Left cardiac atrium (tissue), 4 donors: ENCODE measurements at regions of chr13 and their contacts with region 1.

Region 1: DNA sequence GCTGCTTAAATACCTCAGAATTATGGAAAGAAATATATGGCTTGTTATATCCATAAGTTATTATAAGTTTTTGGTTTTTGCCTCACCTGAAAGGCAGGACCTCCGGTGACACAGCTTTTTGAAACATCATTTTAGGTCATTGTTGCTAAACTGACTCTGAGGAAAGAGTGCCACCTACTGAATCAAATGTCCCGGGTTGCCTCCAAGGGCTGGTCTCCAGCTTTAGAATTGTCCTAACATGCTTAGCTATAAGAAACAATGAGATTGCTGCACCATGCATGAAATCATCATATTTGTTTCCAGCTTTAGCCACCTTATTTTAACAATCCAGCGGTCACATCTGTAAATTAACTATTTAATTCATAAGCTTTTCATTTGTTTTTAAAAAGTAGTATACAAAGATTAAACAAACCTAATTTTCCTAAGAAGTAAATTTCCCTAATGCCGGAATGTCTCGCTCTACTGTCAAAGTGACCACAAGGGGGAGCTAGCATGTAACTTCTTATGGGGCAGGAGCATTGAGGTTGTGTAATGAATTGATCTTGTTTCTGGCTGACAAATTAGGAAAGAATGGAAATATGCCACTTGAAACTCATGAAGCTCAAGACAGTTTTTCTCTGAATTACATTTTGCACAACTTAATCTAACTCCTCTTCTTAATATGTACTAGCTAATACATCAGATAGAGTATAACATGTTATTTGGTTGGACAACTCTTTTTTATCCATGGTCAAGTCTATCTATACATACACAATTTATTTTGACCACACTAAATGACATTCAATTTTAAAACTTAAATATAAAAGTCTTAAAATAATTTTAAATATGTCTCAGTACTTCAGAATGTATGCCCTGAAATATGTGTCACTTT is 6.7 kb upstream of the PCDH17 start:
- DNase-seq: no peak
- ATAC-seq: no peak

Region 2: GRCh38 chr13:57491293-57491692 is 133.5 kb before region 1 on chr13:
- intact Hi-C with region 1: no loop called
- DNase-seq: no peak
- ATAC-seq: no peak

Region 3: DNA sequence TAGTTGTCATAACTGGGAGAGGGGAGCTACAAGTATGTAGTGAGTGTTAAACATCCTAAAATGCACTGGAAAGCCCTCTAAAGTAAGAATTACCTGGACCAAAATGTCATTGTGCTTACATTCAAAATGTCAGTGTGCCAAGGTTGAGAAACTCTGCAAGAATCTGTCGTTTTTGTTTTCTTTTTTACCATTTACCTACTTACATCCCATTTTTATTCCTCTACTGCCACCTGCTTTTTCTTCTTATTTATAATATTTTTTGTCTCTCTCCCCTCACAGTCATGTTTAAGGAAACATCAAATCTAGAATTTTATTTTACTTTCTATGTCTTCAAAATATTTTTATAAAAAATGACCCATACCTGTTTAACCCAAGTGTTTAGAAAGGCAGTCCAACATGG is 233.1 kb after region 1 on chr13:
- intact Hi-C with region 1: loop called in 1 of 2 experiments (anchors 5 kb)
- DNase-seq: no peak
- ATAC-seq: no peak

Region 4: GRCh38 chr13:58960888-58961287 is 1336.1 kb after region 1 on chr13:
- intact Hi-C with region 1: loop called in 1 of 2 experiments (anchors 5 kb)
- DNase-seq: no peak
- ATAC-seq: no peak

Region 5: GRCh38 chr13:58994777-58995176 is 1370.0 kb after region 1 on chr13:
- intact Hi-C with region 1: loop called in 1 of 2 experiments (anchors 10 kb)
- DNase-seq: no peak
- ATAC-seq: no peak

Region 6: DNA sequence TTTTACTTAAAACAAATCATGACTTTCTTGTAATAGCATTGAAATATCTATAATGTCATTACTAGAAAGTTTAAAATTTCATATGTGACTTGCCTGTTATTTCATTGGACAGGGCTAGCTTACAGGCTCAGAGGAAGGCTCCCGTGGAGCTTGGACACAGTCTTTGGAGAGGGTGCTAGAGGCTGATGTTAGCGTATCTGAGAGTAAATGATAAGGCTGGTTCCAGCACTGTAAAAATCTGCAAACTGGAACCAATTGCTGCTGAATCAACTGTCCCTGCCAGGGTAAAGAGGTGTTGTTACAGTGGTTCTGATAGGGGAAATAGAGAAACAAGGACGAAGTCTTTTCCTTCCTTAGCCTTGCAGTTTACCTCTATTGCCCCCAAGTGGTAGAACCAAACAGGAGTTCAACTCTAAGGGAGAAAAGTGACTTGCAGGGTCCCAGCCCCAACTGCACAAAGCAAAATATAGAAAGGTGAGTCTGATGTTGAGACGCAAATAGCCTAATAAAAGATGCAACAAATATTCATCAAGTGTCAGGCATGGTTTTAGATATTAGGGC is 1637.2 kb after region 1 on chr13:
- intact Hi-C with region 1: loop called in 1 of 2 experiments (anchors 2 kb)
- DNase-seq: no peak
- ATAC-seq: peak; percentile 47 to 52

Region 7: DNA sequence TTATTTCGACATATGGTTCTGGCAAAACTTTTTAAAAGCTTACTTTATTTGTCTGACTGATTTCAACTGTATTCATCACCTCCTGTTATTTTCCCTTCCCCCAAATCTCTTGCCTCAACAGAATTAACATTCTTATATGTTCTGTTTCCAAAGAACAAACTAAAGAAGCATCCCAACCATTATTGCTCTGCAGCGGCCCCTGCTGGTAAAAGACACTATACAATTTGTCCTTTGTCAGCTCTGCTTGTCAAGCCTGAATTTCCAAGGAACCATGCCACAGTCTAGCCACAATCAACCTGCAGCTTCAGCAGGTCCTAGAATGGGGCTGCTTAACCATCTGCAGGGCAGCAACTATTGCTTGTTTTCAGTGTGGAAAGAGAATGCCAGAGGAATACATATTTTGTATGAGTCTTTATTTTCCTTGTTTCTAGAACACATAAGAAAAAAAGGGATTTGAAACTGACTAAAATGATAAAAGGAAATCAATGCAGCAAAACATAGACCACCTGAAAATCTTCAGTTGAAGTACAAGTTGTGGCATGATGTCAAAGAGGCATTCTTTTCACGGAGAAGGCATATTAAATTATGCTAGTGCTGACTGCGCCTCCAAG is 1693.6 kb after region 1 on chr13:
- intact Hi-C with region 1: loop called in 1 of 2 experiments (anchors 10 kb)
- DNase-seq: peak; percentile 81
- ATAC-seq: peak in 1 of 2 donors; percentile 58